Activated CD8-positive, alpha-beta T cell treated with anti-CD3 and anti-CD28 coated beads for 36 hours (primary cell): ENCODE measurements at regions of chr2 and their contacts with region 1.

Region 1: GRCh38 chr2:233443468-233444183 is 89.3 kb downstream of the DGKD start:
- DNase-seq: peak; percentile 92
- ATAC-seq: peak; percentile 87
- H3K4me3 Mint-ChIP-seq: no peak overlapping the region
- H3K27ac Mint-ChIP-seq: peak overlapping the region; percentile 13
- H3K4me1 Mint-ChIP-seq: peaks cover 21% of the 10 kb centered on the region
- H3K27me3 Mint-ChIP-seq: no peaks in the 10 kb centered on the region
- CTCF ChIP-seq: peak; percentile 78

Region 2: DNA sequence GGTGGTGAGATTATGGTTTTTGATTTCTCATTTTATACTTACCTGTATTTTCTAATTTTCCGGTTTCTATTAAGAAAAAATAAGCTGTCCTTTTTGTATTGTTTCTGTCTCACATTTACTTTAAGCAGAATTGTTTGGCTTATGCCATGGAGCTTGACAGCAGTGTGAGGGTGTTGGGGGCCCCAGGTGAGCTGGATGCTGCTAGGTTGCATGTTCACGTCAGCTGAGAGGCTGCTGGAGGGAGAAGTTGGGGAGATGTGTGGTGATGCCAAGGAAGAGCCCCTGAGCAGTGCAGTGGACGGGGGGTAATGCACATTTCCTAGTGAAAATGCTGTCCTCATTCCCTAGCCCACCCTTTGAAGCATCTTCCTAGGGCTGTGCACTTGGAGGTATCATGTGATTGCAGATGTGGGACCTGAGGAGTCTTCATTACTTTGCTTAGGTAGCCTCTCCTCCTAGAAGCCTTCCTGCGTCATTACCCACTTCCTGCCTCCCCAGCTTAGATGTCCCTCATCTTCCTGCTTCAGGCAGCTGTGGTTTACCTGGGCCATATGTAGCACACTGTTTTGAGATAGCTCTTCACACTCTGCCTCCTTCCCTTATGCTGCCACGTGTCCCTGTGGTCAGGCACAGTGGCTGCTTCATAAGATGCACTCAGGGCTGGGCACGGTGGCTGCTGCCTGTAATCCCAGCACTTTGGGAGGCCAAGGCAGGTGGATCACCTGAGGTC is 175.9 kb before region 1 on chr2:
- CTCF ChIA-PET with region 1: interaction called, 12 read pairs
- POLR2A ChIA-PET with region 1: interaction called, 3 read pairs
- intact Hi-C with region 1: no loop called
- DNase-seq: peak; percentile 91
- ATAC-seq: peak; percentile 94
- H3K4me3 Mint-ChIP-seq: peak overlapping the region; percentile 60
- H3K27ac Mint-ChIP-seq: peak overlapping the region; percentile 95
- H3K4me1 Mint-ChIP-seq: peaks cover 59% of the 10 kb centered on the region
- H3K27me3 Mint-ChIP-seq: no peaks in the 10 kb centered on the region
- CTCF ChIP-seq: no peak

Region 3: DNA sequence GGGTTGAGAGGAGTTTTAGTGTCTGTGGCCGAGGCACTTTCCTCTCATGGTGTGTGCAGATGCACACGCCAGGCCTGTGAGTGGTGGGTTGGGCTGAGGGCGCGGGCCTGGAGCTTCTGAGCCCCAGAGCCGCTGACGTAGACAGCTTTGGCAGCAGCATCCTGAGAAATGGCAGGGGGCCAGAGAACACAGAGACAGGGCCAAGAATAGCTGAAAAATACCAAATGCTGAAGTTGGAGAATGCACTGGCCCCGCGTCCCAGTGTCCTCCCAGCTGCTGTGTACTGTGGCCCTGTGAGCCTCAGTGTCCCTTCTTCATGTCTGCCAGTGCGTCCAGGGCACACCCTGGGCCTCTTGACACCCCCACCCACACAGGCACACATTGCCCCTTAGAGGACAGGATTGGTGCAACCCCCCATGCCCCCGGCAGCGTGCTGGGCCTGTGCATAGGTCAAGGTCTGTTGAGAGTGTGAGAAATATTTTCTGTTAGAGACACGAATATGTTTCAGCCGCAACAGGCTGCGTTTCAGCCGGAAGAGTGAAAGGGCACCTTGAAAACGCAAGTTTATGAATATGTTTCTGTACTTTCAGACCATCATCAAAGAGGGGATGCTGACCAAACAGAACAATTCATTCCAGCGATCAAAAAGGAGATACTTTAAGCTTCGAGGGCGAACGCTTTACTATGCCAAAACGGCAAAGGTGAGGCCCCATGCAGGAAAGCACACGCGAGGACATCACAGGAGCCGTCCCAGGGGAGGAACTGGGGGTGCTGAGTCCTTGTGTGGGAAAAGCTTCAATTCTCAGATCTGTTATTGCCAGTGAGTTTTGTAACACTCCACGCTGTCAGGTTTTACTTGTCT is 55.7 kb before region 1 on chr2:
- CTCF ChIA-PET with region 1: interaction called, 16 read pairs
- POLR2A ChIA-PET with region 1: no interaction called
- intact Hi-C with region 1: loop called (anchors 10 kb)
- DNase-seq: no peak
- ATAC-seq: no peak
- H3K4me3 Mint-ChIP-seq: peak overlapping the region; percentile 69
- H3K27ac Mint-ChIP-seq: peak overlapping the region; percentile 89
- H3K4me1 Mint-ChIP-seq: peaks cover 70% of the 10 kb centered on the region
- H3K27me3 Mint-ChIP-seq: no peaks in the 10 kb centered on the region
- CTCF ChIP-seq: no peak

Region 4: DNA sequence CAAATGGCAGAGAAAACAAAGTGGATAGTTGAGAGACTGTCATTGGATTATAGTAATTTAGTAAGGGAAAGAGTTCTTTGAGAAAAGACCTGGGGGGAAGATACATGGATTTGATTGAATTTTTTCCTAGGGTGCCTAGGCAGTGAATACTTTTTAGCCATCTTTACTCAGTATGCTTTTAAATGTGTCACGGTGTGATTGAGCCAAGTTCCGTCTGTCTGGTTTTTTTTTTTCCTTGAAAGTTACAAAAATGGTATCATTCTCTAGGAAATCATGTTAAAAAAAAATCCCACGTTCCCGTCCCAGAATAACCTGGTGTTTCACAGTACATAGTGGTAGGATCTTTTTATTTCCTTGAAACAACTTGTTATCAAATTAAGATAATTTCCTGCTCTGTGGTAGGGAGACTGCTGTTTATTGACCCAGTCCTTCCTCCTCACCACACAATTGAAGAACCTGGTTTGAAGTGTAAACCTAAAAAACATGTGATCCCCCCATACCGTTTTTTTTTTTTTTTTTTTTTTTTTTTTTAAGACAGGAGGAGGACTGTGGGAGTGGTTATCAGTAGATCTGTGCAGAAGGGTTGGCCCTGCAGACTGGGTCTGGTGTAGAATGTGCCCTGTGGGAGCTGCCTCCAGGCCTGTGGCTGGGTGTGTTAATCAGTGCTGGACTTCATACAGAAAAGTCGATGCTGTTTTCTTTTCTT is 34.2 kb before region 1 on chr2:
- CTCF ChIA-PET with region 1: interaction called, 213 read pairs
- POLR2A ChIA-PET with region 1: interaction called, 3 read pairs
- intact Hi-C with region 1: loop called (anchors 2 kb)
- DNase-seq: no peak
- ATAC-seq: peak; percentile 70
- H3K4me3 Mint-ChIP-seq: no peak overlapping the region
- H3K27ac Mint-ChIP-seq: peak overlapping the region; percentile 81
- H3K4me1 Mint-ChIP-seq: peaks cover 65% of the 10 kb centered on the region
- H3K27me3 Mint-ChIP-seq: no peaks in the 10 kb centered on the region
- CTCF ChIP-seq: no peak

Region 5: DNA sequence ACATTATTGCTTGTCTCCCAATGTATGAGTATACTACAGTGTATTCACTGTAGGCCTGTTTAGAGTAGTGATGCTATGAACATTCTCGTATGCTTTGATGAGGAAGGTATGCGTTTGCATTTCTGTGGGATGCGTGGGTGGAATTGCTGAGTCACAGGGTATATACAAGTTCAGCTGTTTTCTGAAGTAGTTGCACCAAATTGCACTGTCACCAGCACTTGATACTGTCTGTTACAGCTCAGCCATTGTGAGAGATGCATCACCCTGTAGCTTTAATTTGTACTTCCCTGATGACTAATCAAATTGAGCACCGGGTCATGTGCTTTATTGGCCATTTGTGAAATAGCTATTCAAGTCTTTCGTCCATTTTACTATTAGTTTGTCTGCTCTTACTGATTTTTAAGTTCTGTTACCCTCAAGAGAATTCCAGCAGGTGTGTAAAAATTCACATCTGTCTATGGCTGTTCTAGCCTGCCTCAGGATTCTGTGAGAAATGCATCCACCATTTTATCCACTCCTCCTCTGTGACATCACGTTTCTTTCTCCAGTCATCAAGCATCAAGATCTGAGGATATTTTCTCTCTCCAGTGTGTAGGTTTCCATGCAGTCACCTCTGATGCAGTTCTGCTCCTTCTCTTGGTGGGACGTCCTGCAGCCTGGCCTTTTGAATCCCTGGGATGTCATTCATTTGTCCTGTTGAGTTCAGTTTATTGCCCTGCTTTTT is 16.8 kb before region 1 on chr2:
- CTCF ChIA-PET with region 1: interaction called, 34 read pairs
- POLR2A ChIA-PET with region 1: interaction called, 4 read pairs
- intact Hi-C with region 1: no loop called
- DNase-seq: peak; percentile 82
- ATAC-seq: peak; percentile 57
- H3K4me3 Mint-ChIP-seq: no peak overlapping the region
- H3K27ac Mint-ChIP-seq: peak overlapping the region; percentile 57
- H3K4me1 Mint-ChIP-seq: peaks cover 80% of the 10 kb centered on the region
- H3K27me3 Mint-ChIP-seq: no peaks in the 10 kb centered on the region
- CTCF ChIP-seq: no peak

Region 6: DNA sequence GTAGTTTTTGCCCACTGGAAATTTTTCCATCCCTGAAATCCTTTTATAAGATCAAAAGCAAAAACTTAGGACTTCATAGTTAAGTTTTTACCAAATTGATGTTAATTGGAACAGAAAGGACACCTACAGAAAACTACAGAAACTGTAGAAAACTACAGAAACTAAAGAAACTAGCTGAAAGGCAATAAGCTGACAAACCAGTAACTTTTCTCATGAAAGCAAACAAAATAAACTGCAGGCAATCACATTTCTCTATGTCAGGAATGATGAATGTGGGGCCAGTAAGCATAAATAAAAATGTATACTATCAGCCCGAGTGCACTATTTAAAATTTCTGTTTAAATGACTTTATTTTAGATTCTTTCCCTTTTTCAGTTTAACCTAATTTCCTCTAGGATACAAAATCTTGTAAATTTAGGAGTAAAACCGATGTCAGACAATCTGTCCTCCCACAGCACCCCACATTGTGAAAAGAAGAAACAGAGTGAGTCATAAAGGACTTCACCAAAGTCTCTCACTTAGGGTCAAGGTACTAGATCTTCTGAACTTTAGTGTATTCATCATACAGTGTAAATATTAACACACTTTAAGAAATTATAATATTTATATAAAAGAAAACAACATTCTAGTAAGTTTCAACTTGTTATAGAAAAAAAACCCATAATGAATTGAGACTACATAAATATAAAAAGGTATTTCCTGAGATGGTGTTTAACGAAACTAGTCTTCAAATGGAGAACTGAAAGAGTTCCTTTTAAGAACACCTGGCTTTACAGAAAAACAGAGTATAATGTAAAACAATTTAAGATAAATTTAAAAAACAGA is 76.4 kb after region 1 on chr2:
- CTCF ChIA-PET with region 1: no interaction called
- POLR2A ChIA-PET with region 1: no interaction called
- intact Hi-C with region 1: no loop called
- DNase-seq: no peak
- ATAC-seq: no peak
- H3K4me3 Mint-ChIP-seq: no peak overlapping the region
- H3K27ac Mint-ChIP-seq: no peak overlapping the region
- H3K4me1 Mint-ChIP-seq: peaks cover 2% of the 10 kb centered on the region
- H3K27me3 Mint-ChIP-seq: no peaks in the 10 kb centered on the region
- CTCF ChIP-seq: no peak

Region 7: GRCh38 chr2:233556756-233557736 is 113.4 kb after region 1 on chr2:
- CTCF ChIA-PET with region 1: no interaction called
- POLR2A ChIA-PET with region 1: no interaction called
- intact Hi-C with region 1: no loop called
- DNase-seq: no peak
- ATAC-seq: peak; percentile 62
- H3K4me3 Mint-ChIP-seq: no peak overlapping the region
- H3K27ac Mint-ChIP-seq: peak overlapping the region; percentile 55
- H3K4me1 Mint-ChIP-seq: peaks cover 6% of the 10 kb centered on the region
- H3K27me3 Mint-ChIP-seq: no peaks in the 10 kb centered on the region
- CTCF ChIP-seq: no peak